GM13977 (cell line): ENCODE measurements at regions of chr1 and their contacts with region 1.

Region 1: GRCh38 chr1:54121482-54122134 is 31.2 kb downstream of the CDCP2 start:
- DNase-seq: peak; percentile 80
- CTCF ChIP-seq: peak; percentile 78

Region 2: DNA sequence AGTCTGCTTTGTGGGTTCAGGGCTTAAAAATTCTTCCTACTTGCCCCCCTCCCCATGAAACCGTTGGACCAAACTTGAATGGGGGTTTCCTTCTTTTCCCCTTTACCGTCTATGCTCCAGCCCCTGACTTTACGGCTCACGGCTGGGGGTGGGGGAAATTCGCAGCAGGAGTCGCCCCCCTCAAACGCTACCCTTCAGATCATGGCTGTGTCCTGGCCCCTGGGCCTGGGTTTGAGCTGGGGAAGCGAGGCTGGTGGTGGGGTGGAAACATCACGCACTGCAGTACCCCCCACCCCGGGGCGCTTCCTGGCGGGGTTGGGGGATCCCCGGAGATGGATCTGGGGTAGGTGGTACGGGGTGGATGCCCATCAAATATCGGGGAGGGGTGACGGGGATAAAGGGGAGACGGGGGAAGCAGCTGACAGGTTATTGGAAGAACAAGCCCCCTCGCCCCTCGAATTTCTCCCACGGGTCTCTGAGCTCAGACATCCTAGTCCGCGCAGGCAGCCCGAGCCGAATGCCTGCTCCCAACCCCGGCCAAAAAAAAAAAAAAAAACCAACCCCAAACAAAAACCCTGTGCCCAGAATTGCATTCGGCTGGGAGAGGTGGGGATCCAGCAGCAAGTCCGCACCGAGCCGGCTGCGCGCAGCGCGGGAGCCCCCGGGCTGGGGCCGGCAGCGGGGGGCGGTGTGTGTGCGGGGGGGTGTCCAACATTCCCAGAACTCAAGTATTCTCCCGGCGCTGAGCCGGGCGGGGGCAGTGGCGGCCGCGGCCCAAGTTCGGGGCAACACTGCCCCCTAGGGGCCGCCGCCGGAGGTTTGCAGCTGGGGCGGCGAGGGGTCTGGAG is 367.4 kb after region 1 on chr1:
- in situ Hi-C with region 1: loop called (anchors 25 kb)
- DNase-seq: peak; percentile 94
- CTCF ChIP-seq: peak; percentile 91